PC-9 (cell line): ENCODE measurements at regions of chr3 and their contacts with region 1.

Region 1: DNA sequence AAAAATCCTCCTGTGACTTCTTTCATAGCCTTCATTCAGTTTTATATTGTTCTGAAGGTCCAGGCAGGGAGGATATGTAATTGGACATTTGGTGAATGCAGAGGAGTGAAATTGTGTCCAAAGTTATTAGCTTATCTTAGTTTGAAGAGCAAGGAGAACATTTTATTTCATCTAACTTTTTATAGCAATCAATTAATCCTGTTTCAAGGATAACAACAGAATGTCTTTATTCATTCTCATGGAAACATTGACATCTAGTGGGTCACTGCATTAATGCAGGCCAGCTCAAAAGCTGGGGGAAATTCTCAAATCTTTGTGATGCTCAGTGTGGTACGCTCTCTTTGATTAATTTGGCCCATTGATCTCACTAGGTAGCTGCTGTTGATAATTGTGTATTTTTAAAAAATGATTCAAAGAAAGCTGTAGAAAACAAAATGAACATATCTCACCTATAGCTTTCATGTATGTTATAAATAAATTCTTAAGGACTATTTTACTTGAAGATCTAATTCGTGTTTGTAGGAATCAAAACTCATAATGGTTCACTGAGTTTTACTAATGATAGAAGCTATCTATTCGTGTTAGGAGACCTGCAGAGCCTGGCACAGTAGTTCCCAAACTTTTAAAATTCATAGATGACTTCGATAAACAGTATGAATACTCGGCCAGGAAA is 150.8 kb upstream of the KCNMB2 start:
- DNase-seq: peak in 1 of 2 experiments; percentile 31
- H3K4me3 ChIP-seq: no peak overlapping the region
- H3K27ac ChIP-seq: no peak overlapping the region
- H3K4me1 ChIP-seq: peaks cover 26% of the 10 kb centered on the region
- H3K27me3 ChIP-seq: no peaks in the 10 kb centered on the region
- CTCF ChIP-seq: peak; percentile 98

Region 2: GRCh38 chr3:176663837-176664831 is 1721.3 kb before region 1 on chr3:
- CTCF ChIA-PET with region 1: no interaction called
- POLR2A ChIA-PET with region 1: no interaction called
- intact Hi-C with region 1: loop called (anchors 10 kb)
- DNase-seq: peak; percentile 10 to 65
- H3K4me3 ChIP-seq: no peak overlapping the region
- H3K27ac ChIP-seq: no peak overlapping the region
- H3K4me1 ChIP-seq: 0 out of 2 replicates have a peak, but pooled peaks cover 4% of the 10 kb centered on the region
- H3K27me3 ChIP-seq: no peaks in the 10 kb centered on the region
- CTCF ChIP-seq: peak; percentile 69

Region 3: GRCh38 chr3:177294221-177294620 is 1091.2 kb before region 1 on chr3:
- CTCF ChIA-PET with region 1: no interaction called
- POLR2A ChIA-PET with region 1: no interaction called
- intact Hi-C with region 1: loop called (anchors 2 kb)
- DNase-seq: peak; percentile 69 to 71
- H3K4me3 ChIP-seq: no peak overlapping the region
- H3K27ac ChIP-seq: peak overlapping the region; percentile 57; the same call in 1 of the 2 replicates
- H3K4me1 ChIP-seq: peaks cover 23% of the 10 kb centered on the region
- H3K27me3 ChIP-seq: no peaks in the 10 kb centered on the region
- CTCF ChIP-seq: no peak

Region 4: DNA sequence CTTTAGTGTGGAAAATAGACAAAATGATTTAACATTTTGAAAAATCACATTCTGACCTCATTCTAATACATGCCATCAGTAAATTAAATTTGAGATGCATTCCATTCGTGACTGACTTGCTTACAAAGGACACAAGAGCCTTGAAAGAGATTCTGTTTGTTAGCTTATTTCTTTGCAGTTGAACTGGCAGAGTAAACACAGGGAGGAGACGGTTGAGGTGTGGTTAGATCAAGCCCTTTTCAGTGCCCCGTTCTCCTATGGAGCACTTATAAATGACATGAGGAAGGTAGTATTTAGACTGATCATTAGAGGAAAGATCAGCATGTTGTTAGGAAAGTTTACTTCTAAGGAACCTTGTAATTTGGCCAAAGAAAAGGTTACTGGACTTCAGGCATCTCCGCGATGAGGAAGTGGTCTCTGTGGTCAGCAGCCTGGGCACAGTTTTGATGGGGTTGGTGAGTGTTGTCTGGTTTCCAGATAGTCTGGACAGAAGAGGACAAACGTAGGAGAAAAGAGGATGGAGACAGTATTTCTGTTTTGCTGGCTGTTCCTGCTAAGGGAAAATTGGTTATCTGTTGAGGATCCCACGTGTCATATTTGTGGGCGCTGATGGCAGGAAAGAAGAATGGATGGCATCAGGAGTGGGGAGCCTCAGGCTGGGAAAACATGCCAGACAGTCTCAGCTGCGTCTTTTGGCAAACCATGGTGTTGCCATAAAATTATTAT is 859.3 kb before region 1 on chr3:
- CTCF ChIA-PET with region 1: no interaction called
- POLR2A ChIA-PET with region 1: no interaction called
- intact Hi-C with region 1: loop called (anchors 5 kb)
- DNase-seq: peak; percentile 25 to 87
- H3K4me3 ChIP-seq: no peak overlapping the region
- H3K27ac ChIP-seq: no peak overlapping the region
- H3K4me1 ChIP-seq: peaks cover 79% of the 10 kb centered on the region
- H3K27me3 ChIP-seq: no peaks in the 10 kb centered on the region
- CTCF ChIP-seq: no peak

Region 5: GRCh38 chr3:177810162-177810623 is 575.2 kb before region 1 on chr3:
- CTCF ChIA-PET with region 1: no interaction called
- POLR2A ChIA-PET with region 1: no interaction called
- intact Hi-C with region 1: loop called (anchors 5 kb)
- DNase-seq: peak in 1 of 2 experiments; percentile 99
- H3K4me3 ChIP-seq: no peak overlapping the region
- H3K27ac ChIP-seq: peak overlapping the region; percentile 82
- H3K4me1 ChIP-seq: peaks cover 34% of the 10 kb centered on the region
- H3K27me3 ChIP-seq: no peaks in the 10 kb centered on the region
- CTCF ChIP-seq: no peak